ENCODE measurements at regions of chr13 and their contacts with region 1.

Region 1: GRCh38 chr13:39037880-39038568 is at the starts of genes NHLRC3 and PROSER1:
- DNase-seq: peak; percentile 74
- H3K4me3 Mint-ChIP-seq: peak within 1 kb of the TSS; percentile 94
- H3K27ac Mint-ChIP-seq: peak within 1 kb of the TSS; percentile 94
- H3K4me1 Mint-ChIP-seq: peaks cover 38% of the 10 kb centered on the region
- H3K27me3 Mint-ChIP-seq: no peaks in the 10 kb centered on the region
- total RNA-seq, gene NHLRC3: 21.6 and 22.5 TPM in 2 replicates
- total RNA-seq, gene PROSER1: 90.9 and 92.0 TPM in 2 replicates

Region 2: GRCh38 chr13:38349390-38350113 is 688.5 kb before region 1 on chr13 and contains the start of gene UFM1:
- intact Hi-C with region 1: loop called (anchors 5 kb)
- DNase-seq: peak; percentile 82
- H3K4me3 Mint-ChIP-seq: peak within 1 kb of the TSS; percentile 100
- H3K27ac Mint-ChIP-seq: peak within 1 kb of the TSS; percentile 99
- H3K4me1 Mint-ChIP-seq: peaks cover 36% of the 10 kb centered on the region
- H3K27me3 Mint-ChIP-seq: no peaks in the 10 kb centered on the region
- total RNA-seq, gene UFM1: 68.2 and 73.4 TPM in 2 replicates

Region 3: DNA sequence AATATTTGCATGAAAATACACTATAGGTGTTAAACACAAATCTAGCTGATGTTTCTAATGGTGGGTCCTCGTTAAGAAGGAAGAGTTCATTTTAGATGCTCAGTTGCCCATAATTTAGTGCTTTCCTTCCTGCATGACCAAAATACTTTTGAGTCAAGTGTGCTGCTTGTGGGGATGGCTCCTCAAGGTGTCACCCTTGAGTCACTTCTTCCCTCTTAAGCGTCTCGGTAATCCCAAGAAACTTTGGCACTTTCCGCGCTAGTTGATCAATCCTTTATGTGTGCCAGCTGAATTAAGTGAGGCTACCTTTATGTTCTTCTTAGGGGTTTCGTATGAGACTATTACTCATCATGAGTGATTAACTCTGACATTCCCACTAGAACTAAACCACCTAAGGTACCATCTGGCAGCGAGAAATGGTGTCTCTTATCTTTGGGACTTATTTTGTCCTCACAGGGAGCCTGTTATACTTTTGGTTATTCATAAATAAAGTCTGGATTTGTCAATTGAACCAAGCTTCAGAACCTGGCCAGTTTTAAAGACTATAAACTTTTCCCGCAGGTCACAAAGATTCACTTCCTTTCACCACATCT is 107.0 kb after region 1 on chr13:
- intact Hi-C with region 1: loop called (anchors 5 kb)
- DNase-seq: no peak
- H3K4me3 Mint-ChIP-seq: no peak overlapping the region
- H3K27ac Mint-ChIP-seq: no peak overlapping the region
- H3K4me1 Mint-ChIP-seq: peaks cover 12% of the 10 kb centered on the region
- H3K27me3 Mint-ChIP-seq: peaks cover 31% of the 10 kb centered on the region

Region 4: DNA sequence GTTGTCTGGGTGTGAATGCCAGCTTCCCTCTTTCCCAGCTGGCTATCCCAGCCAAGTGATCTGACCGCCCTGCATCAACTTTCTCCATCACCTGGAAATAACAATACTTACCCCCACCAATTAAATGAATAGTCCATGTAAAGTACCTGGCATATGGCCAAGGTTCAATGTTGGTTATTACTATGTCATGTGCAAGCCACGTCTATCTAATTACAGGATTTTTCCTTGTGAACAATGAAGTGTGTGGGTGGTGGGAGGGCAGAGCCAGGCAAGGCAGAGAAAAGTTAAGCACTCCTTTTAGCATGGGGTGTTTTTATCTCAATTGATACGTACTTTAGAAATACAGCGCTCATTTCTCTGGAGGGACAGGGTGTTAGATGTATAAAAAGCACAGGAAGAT is 121.4 kb after region 1 on chr13:
- intact Hi-C with region 1: no loop called
- DNase-seq: no peak
- H3K4me3 Mint-ChIP-seq: no peak overlapping the region
- H3K27ac Mint-ChIP-seq: no peak overlapping the region
- H3K4me1 Mint-ChIP-seq: no peaks in the 10 kb centered on the region
- H3K27me3 Mint-ChIP-seq: peaks cover 25% of the 10 kb centered on the region

Region 5: GRCh38 chr13:39263033-39263432 is 225.0 kb after region 1 on chr13:
- intact Hi-C with region 1: loop called (anchors 5 kb)
- DNase-seq: peak; percentile 17
- H3K4me3 Mint-ChIP-seq: no peak overlapping the region
- H3K27ac Mint-ChIP-seq: no peak overlapping the region
- H3K4me1 Mint-ChIP-seq: peaks cover 18% of the 10 kb centered on the region
- H3K27me3 Mint-ChIP-seq: peaks cover 3% of the 10 kb centered on the region

Region 6: GRCh38 chr13:40388617-40389016 is 1350.6 kb after region 1 on chr13:
- intact Hi-C with region 1: loop called (anchors 5 kb)
- DNase-seq: peak; percentile 83
- H3K4me3 Mint-ChIP-seq: peak overlapping the region; percentile 80
- H3K27ac Mint-ChIP-seq: peak overlapping the region; percentile 98
- H3K4me1 Mint-ChIP-seq: peaks cover 38% of the 10 kb centered on the region
- H3K27me3 Mint-ChIP-seq: no peaks in the 10 kb centered on the region

Measured in activated T-helper 2 cell treated with anti-CD3 and anti-CD28 coated beads, Interferon-gamma antibody, Interleukin-2, Interleukin-4, amounts not matched to agents 10 μg/mL and 5 μg/mL and 100 μg/mL, durations not matched to agents 14 hours and 24 hours and 36 hours (primary cell).